ENCODE measurements at regions of chr2 and their contacts with region 1.

Region 1: GRCh38 chr2:230411570-230412370 is 4.2 kb upstream of the SP100 start:
- DNase-seq: peak; percentile 86
- CTCF ChIP-seq: no peak

Region 2: DNA sequence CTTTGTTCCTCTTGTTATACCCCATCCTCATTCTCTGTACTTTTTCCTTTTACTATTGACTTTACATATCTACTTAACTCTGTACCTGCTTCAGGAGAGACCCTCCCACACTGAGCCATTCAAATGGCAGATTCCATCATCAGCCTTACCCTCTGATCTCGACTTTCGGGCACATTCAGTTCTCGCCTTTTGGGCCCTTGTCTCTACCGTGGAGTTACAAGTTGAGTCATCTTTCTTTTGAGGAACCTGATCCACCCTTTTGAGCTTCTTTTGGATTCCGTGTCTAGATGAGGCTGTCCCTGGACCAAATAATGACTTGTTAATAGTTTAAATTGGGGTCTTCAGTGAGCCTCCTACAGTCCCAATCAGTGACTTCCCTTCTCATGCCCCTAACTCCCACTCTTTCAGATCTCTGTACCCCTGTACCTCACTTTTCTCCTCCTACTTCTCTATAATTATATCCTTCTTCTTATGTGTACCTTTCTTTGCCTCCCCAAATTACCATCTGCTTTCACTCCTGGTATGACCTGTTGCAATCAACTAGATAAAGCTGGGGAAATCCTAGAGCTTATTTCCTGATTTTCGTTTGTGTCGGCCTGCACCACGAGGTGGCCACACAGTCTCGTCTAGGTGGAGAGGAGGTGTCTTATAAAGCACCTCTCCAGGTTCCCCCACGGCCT is 209.2 kb before region 1 on chr2:
- in situ Hi-C with region 1: loop called (anchors 10 kb)
- DNase-seq: peak; percentile 49
- CTCF ChIP-seq: peak; percentile 52

Region 3: DNA sequence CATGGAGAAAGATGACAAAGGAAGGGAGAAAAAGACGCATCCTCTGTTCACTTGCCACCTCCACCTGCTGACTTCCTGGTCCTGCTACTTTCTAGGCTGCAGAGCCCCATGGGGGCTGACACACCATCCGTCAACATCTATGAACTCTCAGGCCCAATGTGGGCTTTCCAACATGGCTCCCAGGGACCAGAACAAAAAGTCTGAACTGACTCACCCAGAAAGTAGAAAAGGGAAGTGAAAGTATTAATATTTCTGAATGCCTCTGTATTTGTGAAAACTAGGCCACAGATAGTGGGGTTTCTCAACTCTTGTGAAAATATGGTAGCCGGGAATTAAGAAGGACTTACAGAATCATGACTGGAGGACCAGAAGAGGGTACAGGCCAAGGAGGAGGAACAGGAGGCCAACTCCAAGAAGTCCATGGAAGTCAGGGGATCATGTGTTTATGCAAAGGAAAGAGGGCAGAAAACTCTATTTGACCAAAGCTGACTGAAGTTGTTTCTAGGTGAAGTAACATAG is 177.8 kb after region 1 on chr2:
- in situ Hi-C with region 1: loop called (anchors 10 kb)
- DNase-seq: peak; percentile 69
- CTCF ChIP-seq: no peak

Measured in GM13976 (cell line).